SK-N-SH (cell line): ENCODE measurements at regions of chr17 and their contacts with region 1.

Region 1: GRCh38 chr17:45828628-45829027 is 16.1 kb upstream of the SPPL2C start:
- DNase-seq: peak; percentile 74
- H3K4me3 ChIP-seq: no peak overlapping the region; a peak in 1 of 4 replicates
- H3K27ac ChIP-seq: peak overlapping the region in 1 of 2 experiments; percentile 94; a peak in 2 of 4 replicates
- H3K4me1 ChIP-seq: peaks cover 0 to 62% of the 10 kb centered on the region in 2 experiments; a peak in 3 of 4 replicates
- H3K27me3 ChIP-seq: no peaks in the 10 kb centered on the region
- CTCF ChIP-seq: no peak
- EP300 ChIP-seq: no peak
- RAD21 ChIP-seq: peak; percentile 15; the same call in 1 of the 2 replicates

Region 2: GRCh38 chr17:45648642-45649041 is 180.0 kb before region 1 on chr17:
- CTCF ChIA-PET with region 1: interaction called, 38 read pairs
- POLR2A ChIA-PET with region 1: no interaction called
- DNase-seq: peak; percentile 26
- H3K4me3 ChIP-seq: no peak overlapping the region
- H3K27ac ChIP-seq: no peak overlapping the region
- H3K4me1 ChIP-seq: no peaks in the 10 kb centered on the region
- H3K27me3 ChIP-seq: peaks cover 5% of the 10 kb centered on the region; the same call in 1 of the 2 replicates
- CTCF ChIP-seq: peak; percentile 28; the same call in 1 of the 2 replicates
- EP300 ChIP-seq: no peak
- RAD21 ChIP-seq: peak; percentile 10; the same call in 1 of the 2 replicates

Region 3: DNA sequence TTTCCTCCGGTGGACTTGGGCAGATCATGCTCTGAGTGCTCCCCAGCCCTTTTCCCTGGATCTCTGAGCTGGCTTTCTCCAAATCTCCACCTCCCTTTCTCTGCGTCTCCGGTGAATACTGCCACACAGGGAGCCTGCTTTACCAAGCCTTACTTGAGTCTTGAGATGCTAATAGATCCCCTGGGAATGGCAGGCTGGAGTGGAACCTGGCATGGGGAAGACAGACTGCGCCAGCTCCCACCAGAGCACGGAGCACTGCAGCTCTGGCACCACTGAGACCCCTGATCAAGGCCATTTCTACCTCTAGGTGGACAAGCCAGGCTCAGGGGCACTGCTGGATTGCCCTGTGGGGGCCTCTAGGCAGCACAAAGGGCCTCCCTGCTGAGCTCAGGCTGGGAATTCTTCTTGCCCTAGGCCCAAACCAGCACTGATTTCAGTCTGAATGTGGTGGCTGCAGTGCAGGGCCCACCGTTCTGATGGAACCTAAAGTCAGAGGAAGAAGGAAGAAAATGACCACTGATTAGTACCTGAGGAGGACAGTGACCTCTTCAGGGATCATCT is 118.8 kb before region 1 on chr17:
- CTCF ChIA-PET with region 1: interaction called, 14 read pairs
- POLR2A ChIA-PET with region 1: no interaction called
- DNase-seq: no peak
- H3K4me3 ChIP-seq: no peak overlapping the region
- H3K27ac ChIP-seq: no peak overlapping the region
- H3K4me1 ChIP-seq: no peaks in the 10 kb centered on the region
- H3K27me3 ChIP-seq: peaks cover 14% of the 10 kb centered on the region; the same call in 1 of the 2 replicates
- CTCF ChIP-seq: no peak
- EP300 ChIP-seq: no peak
- RAD21 ChIP-seq: no peak

Region 4: GRCh38 chr17:45747911-45748310 is 80.7 kb before region 1 on chr17:
- CTCF ChIA-PET with region 1: interaction called, 26 read pairs
- POLR2A ChIA-PET with region 1: no interaction called
- DNase-seq: no peak
- H3K4me3 ChIP-seq: no peak overlapping the region
- H3K27ac ChIP-seq: no peak overlapping the region
- H3K4me1 ChIP-seq: no peaks in the 10 kb centered on the region; a peak in 1 of 4 replicates
- H3K27me3 ChIP-seq: peaks cover 31% of the 10 kb centered on the region; the same call in 1 of the 2 replicates
- CTCF ChIP-seq: no peak
- EP300 ChIP-seq: no peak
- RAD21 ChIP-seq: no peak

Region 5: GRCh38 chr17:45782889-45783592 is 45.6 kb before region 1 on chr17:
- CTCF ChIA-PET with region 1: interaction called, 164 read pairs
- POLR2A ChIA-PET with region 1: no interaction called
- DNase-seq: peak; percentile 94
- H3K4me3 ChIP-seq: peak overlapping the region; percentile 43 to 65
- H3K27ac ChIP-seq: no peak overlapping the region
- H3K4me1 ChIP-seq: peaks cover 4 to 24% of the 10 kb centered on the region in 2 experiments; a peak in 1 of 4 replicates
- H3K27me3 ChIP-seq: peaks cover 43% of the 10 kb centered on the region
- CTCF ChIP-seq: peak; percentile 71
- EP300 ChIP-seq: no peak
- RAD21 ChIP-seq: peak; percentile 37

Region 6: GRCh38 chr17:45812102-45812501 is 16.5 kb before region 1 on chr17:
- CTCF ChIA-PET with region 1: interaction called, 34 read pairs
- POLR2A ChIA-PET with region 1: interaction called, 4 read pairs
- DNase-seq: no peak
- H3K4me3 ChIP-seq: no peak overlapping the region
- H3K27ac ChIP-seq: no peak overlapping the region
- H3K4me1 ChIP-seq: peaks cover 0 to 34% of the 10 kb centered on the region in 2 experiments; a peak in 1 of 4 replicates
- H3K27me3 ChIP-seq: 0 out of 2 replicates have a peak, but pooled peaks cover 2% of the 10 kb centered on the region
- CTCF ChIP-seq: no peak
- EP300 ChIP-seq: no peak
- RAD21 ChIP-seq: no peak

Region 7: GRCh38 chr17:45894022-45894784 is 65.6 kb after region 1 on chr17 and contains the start of gene MAPT:
- CTCF ChIA-PET with region 1: interaction called, 11 read pairs
- POLR2A ChIA-PET with region 1: no interaction called
- DNase-seq: peak; percentile 100
- H3K4me3 ChIP-seq: peak within 1 kb of the TSS; percentile 77 to 92
- H3K27ac ChIP-seq: peak within 1 kb of the TSS in 1 of 2 experiments; percentile 71; a peak in 1 of 4 replicates
- H3K4me1 ChIP-seq: peaks cover 0 to 19% of the 10 kb centered on the region in 2 experiments; a peak in 1 of 4 replicates
- H3K27me3 ChIP-seq: peaks cover 42% of the 10 kb centered on the region
- CTCF ChIP-seq: peak; percentile 83
- EP300 ChIP-seq: no peak; a peak in 1 of 4 replicates
- RAD21 ChIP-seq: peak; percentile 51
- polyA plus RNA-seq, gene MAPT: 0.47 and 0.74 TPM in 2 replicates